ENCODE measurements at regions of chr6 and their contacts with region 1.

Region 1: GRCh38 chr6:1739680-1740079 is 130.0 kb downstream of the FOXC1 start:
- DNase-seq: peak; percentile 31
- ATAC-seq: peak; percentile 84
- H3K4me3 Mint-ChIP-seq: peak overlapping the region; percentile 72
- H3K27ac Mint-ChIP-seq: no peak overlapping the region
- H3K4me1 Mint-ChIP-seq: peaks cover 11% of the 10 kb centered on the region
- H3K27me3 Mint-ChIP-seq: no peaks in the 10 kb centered on the region
- CTCF ChIP-seq: no peak

Region 2: GRCh38 chr6:1609648-1610496 is 129.8 kb before region 1 on chr6 and contains the start of gene FOXC1:
- CTCF ChIA-PET with region 1: interaction called, 4 read pairs
- POLR2A ChIA-PET with region 1: interaction called, 4 read pairs
- intact Hi-C with region 1: loop called (anchors 2 kb)
- DNase-seq: peak; percentile 57
- ATAC-seq: peak; percentile 43
- H3K4me3 Mint-ChIP-seq: peak within 1 kb of the TSS; percentile 78
- H3K27ac Mint-ChIP-seq: peak within 1 kb of the TSS; percentile 35
- H3K4me1 Mint-ChIP-seq: peaks cover 43% of the 10 kb centered on the region
- H3K27me3 Mint-ChIP-seq: peaks cover 57% of the 10 kb centered on the region
- CTCF ChIP-seq: no peak
- total RNA-seq, gene FOXC1: 1.00 and 1.1 TPM in 2 replicates

Region 3: GRCh38 chr6:1665214-1665613 is 74.5 kb before region 1 on chr6:
- CTCF ChIA-PET with region 1: no interaction called
- POLR2A ChIA-PET with region 1: no interaction called
- intact Hi-C with region 1: loop called (anchors 1 kb)
- DNase-seq: no peak
- ATAC-seq: peak; percentile 92
- H3K4me3 Mint-ChIP-seq: peak overlapping the region; percentile 15
- H3K27ac Mint-ChIP-seq: peak overlapping the region; percentile 80
- H3K4me1 Mint-ChIP-seq: peaks cover 24% of the 10 kb centered on the region
- H3K27me3 Mint-ChIP-seq: peaks cover 7% of the 10 kb centered on the region
- CTCF ChIP-seq: no peak

Region 4: DNA sequence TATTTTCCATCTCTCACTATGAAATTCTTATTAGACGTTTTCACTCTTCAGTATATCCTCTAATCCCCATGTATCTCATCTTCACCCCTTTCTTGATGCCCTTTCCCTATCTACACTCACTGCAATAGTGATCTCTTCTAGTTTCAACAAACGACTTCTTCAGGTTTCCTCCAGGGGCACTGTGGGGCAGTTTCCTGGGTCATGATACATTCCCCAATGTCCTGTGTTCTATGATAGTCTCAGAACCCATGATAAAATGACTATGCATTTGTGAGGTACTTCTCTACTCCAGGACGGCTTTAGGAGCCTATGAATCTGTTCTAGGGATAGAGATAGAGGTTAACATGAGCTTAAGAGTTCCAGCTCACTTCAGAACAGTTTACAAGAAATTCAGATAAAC is 53.3 kb after region 1 on chr6:
- CTCF ChIA-PET with region 1: no interaction called
- POLR2A ChIA-PET with region 1: no interaction called
- intact Hi-C with region 1: loop called (anchors 2 kb)
- DNase-seq: no peak
- ATAC-seq: peak; percentile 60
- H3K4me3 Mint-ChIP-seq: no peak overlapping the region
- H3K27ac Mint-ChIP-seq: no peak overlapping the region
- H3K4me1 Mint-ChIP-seq: peaks cover 14% of the 10 kb centered on the region
- H3K27me3 Mint-ChIP-seq: no peaks in the 10 kb centered on the region
- CTCF ChIP-seq: no peak

Region 5: DNA sequence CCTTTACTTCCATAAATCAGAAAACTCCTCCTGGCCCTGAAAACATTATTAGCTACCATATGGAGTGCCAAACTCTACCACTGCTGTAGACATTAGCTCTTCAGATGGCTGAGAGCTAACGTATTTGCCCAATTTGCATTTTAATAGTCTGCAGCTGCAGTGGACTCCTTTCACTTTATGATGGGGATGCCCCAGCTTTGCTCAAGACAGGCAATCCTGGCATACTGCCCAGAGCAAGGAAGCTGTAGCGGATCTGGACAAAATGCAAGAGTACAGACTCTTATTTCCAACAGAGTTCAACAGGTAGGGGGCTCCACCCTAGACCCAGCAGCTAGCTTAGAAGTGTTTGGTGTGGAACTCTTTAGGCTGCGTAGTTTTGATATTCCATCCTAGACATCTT is 116.7 kb after region 1 on chr6:
- CTCF ChIA-PET with region 1: no interaction called
- POLR2A ChIA-PET with region 1: no interaction called
- intact Hi-C with region 1: loop called (anchors 1 kb)
- DNase-seq: peak; percentile 32
- ATAC-seq: peak; percentile 84
- H3K4me3 Mint-ChIP-seq: peak overlapping the region; percentile 30
- H3K27ac Mint-ChIP-seq: peak overlapping the region; percentile 54
- H3K4me1 Mint-ChIP-seq: peaks cover 36% of the 10 kb centered on the region
- H3K27me3 Mint-ChIP-seq: no peaks in the 10 kb centered on the region
- CTCF ChIP-seq: no peak

Region 6: DNA sequence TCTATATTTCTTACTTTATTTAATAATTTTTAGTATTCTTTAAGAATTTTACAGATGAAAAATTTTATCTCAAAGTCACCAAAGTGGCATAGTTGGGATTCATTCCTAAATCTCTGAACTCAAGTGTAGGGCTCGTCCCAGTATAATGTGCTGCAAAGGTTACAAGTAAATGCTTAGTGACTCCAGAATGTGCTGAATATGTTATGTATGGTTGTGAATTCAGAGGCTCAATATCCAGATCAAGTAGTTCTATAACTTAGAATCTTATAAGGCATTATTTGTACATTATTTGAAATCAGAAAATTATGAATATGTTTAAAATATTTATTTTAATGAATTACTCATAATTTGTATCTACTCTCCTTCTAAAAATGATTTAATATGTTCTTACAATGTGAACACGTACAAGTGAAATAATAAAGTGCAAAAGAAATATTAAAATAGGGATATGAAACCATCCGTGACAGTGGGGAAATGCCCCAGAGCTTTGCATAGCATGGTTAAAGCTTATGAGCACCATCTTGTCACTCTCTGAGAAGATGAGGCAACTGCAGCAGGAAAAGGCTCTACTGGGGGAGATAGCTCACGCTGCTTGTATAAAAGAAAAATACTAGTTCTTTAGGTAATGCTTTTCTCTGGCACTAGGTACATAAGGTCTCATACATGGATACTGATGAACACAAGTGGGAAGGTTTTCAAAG is 129.0 kb after region 1 on chr6:
- CTCF ChIA-PET with region 1: no interaction called
- POLR2A ChIA-PET with region 1: no interaction called
- intact Hi-C with region 1: loop called (anchors 1 kb)
- DNase-seq: no peak
- ATAC-seq: peak; percentile 98
- H3K4me3 Mint-ChIP-seq: peak overlapping the region; percentile 65
- H3K27ac Mint-ChIP-seq: peak overlapping the region; percentile 95
- H3K4me1 Mint-ChIP-seq: peaks cover 31% of the 10 kb centered on the region
- H3K27me3 Mint-ChIP-seq: no peaks in the 10 kb centered on the region
- CTCF ChIP-seq: no peak

Region 7: GRCh38 chr6:3023663-3024483 is 1284.2 kb after region 1 on chr6:
- CTCF ChIA-PET with region 1: no interaction called
- POLR2A ChIA-PET with region 1: no interaction called
- intact Hi-C with region 1: loop called (anchors 10 kb)
- DNase-seq: peak; percentile 76
- ATAC-seq: peak; percentile 82
- H3K4me3 Mint-ChIP-seq: peak overlapping the region; percentile 90
- H3K27ac Mint-ChIP-seq: peak overlapping the region; percentile 88
- H3K4me1 Mint-ChIP-seq: peaks cover 54% of the 10 kb centered on the region
- H3K27me3 Mint-ChIP-seq: no peaks in the 10 kb centered on the region
- CTCF ChIP-seq: no peak